Mucosa of descending colon (tissue), 3 donors: ENCODE measurements at regions of chr6 and their contacts with region 1.

Region 1: GRCh38 chr6:163210991-163211390 is 203.5 kb upstream of the QKI start:
- DNase-seq: no peak
- ATAC-seq: no peak
- H3K4me3 ChIP-seq: no peak overlapping the region
- H3K4me1 ChIP-seq: no peaks in the 10 kb centered on the region
- CTCF ChIP-seq: no peak

Region 2: GRCh38 chr6:163054641-163055040 is 156.3 kb before region 1 on chr6:
- intact Hi-C with region 1: no loop called
- DNase-seq: no peak
- ATAC-seq: no peak
- H3K4me3 ChIP-seq: no peak overlapping the region
- H3K4me1 ChIP-seq: no peaks in the 10 kb centered on the region
- CTCF ChIP-seq: no peak

Region 3: DNA sequence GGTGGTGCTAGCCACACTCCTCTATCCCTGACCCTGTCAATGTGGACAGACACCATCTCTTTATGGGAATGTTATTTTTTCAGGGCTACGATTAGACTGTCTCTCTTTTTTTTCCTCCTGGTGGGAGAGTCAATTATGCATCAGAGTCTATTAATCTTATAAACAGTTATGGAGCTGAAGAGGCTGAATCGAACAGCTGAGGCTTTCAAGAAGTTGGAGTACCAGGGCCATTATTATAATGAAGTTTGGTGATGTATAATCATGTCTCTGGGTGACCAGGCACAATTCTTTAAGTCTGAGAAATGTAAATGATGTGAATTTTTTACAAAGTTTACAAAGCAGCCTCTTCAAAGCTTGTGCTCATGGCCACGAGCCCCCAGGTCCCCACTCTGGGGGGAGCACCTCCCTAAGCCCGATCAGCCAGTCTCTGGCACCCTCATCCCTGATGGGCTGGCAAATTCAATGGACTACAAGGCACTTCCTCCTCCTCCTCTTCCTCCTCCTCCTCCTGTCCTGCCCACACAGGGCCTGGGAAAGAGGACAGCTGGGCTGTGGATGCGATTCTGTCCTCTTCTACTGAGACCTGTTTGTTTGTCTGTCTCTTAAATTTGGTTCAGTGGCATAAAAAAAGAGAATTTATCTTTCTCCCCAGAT is 159.6 kb after region 1 on chr6:
- intact Hi-C with region 1: loop called in 1 of 2 experiments (anchors 5 kb)
- DNase-seq: no peak
- ATAC-seq: no peak
- H3K4me3 ChIP-seq: no peak overlapping the region
- H3K4me1 ChIP-seq: no peaks in the 10 kb centered on the region
- CTCF ChIP-seq: no peak